Activated CD4-positive, alpha-beta T cell treated with anti-CD3 and anti-CD28 coated beads, Interleukin-2, amount 10 ng/mL, durations not matched to agents 7 days and 5 days (primary cell): ENCODE measurements at regions of chr6 and their contacts with region 1.

Region 1: DNA sequence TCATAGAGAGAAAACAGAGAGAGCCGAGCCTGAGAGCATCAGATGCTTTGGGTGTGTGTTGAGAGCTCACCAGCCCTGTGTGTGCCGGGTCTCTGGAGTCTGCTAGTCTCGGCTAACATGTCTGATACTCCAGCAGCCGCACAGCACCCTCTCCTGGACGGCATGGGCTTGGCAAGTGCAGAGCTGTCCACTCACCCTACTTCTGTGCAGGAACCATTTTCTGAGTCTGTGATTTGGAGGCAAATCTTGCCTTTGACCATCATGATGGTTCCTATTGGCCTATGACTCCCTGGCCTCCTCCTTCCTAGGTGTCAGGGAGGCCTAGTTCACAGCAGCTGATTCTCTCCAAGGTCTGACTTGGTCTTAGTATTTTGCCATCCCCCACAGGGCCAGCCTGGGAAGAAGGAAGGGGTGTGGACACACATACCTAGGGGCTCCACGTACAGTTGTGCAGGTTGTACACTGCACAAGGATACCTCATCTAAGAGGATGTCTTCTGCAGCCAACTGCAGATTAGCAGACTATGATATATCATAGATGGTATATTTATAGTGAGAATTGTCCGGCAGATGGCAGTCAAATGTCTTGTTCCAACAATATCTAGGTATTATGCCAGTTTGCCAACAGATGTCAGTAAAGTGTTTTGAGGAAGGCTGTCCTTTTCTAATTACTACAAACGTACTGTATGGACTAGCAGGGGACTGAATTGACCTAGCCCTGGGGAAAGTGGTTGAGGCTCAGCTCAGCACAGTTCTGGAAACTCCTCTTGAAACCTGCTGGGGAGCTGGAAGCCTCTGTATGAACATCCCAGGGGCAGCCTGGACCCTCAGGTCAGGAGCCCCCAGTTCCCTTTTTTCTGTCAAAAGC is 13.0 kb downstream of the FGD2 start:
- DNase-seq: peak; percentile 95
- H3K4me3 Mint-ChIP-seq: no peak overlapping the region
- H3K27ac Mint-ChIP-seq: peak overlapping the region; percentile 85
- H3K4me1 Mint-ChIP-seq: peaks cover 54% of the 10 kb centered on the region
- H3K27me3 Mint-ChIP-seq: no peaks in the 10 kb centered on the region

Region 2: DNA sequence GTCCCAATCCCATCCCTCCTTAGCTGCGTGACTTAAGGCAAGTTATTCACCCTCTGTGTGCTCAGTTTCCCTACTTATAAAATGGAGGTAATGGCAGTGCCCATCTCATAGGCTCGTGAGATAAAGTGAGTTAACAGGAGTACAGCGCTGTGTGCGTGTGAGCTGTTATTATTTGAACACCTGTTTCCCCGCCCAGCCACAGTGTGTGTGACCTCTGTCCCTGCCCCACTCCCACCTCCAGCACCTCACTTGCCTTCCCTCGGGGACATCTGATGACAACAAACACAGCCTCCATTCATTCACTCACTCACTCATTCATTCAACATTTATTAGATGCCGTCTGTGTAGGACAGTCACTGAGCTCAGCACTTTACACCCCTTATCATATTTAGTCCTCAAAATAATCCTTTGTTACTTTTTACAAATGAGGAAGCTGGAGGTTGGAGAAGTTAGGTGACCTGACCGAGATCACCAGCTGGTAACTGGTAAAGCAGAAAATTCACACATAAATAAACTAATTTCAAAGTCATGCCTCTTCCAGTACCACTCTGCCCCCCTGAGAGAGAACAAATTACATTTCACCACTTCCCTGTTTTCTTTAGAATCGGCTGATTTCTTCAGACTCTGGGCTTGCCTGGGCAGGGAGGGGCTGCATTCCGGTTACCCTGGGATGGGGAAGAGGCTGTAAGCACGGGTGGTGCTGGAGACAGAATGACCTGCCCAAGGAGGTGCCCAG is 237.8 kb before region 1 on chr6:
- CTCF ChIA-PET with region 1: interaction called, 10 read pairs
- POLR2A ChIA-PET with region 1: no interaction called
- DNase-seq: no peak
- H3K4me3 Mint-ChIP-seq: no peak overlapping the region
- H3K27ac Mint-ChIP-seq: no peak overlapping the region
- H3K4me1 Mint-ChIP-seq: peaks cover 12% of the 10 kb centered on the region
- H3K27me3 Mint-ChIP-seq: peaks cover 11% of the 10 kb centered on the region

Region 3: DNA sequence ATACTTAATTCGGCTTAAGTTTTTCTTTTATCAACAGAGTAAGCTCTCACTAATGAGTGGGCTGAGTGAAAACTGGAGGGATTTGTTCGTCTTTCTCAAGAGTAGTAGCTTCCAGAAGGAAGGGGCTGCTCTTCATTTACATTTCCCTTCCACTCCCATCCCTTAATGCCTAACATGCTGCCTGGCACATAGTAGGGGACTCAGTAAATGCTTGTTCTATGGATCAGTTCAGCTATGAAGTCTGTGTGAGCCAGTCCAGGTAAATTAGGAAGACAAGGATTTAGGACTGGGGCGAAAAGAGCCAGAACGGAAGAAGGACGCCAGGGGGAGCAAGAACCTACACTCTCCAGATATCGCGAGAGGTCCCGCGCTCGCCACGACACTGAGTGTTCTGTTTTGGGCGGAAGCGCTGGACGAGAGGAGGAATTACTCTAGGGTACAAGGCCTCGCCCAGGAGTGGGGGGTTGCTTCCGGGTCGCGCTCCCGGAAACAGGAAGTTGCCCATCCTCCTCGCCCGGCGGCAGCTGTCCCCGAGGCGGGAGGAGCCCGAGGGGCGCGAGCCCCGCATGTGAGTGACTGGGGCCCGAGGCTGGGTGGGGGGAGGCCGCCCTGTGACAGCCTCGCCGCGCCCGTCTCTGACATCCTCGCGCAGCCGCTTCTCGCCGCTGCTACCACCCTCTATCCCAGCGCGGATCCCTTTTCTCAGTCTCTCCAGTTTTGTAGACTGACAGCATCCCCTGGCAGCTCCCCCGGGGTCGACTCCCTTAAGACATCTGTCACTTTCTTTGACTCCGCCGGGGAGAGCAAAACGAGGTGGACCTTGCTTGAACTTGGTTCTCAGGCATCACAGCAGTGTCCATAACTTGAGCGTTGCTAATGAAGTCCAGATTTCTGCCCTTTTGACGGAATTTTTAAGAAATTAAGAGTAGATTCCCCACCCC is 132.7 kb before region 1 on chr6 and contains the start of gene C6orf89:
- CTCF ChIA-PET with region 1: interaction called, 39 read pairs
- POLR2A ChIA-PET with region 1: no interaction called
- DNase-seq: peak; percentile 99
- H3K4me3 Mint-ChIP-seq: peak within 1 kb of the TSS; percentile 90
- H3K27ac Mint-ChIP-seq: peak within 1 kb of the TSS; percentile 94
- H3K4me1 Mint-ChIP-seq: peaks cover 38% of the 10 kb centered on the region
- H3K27me3 Mint-ChIP-seq: no peaks in the 10 kb centered on the region
- total RNA-seq, gene C6orf89: 47.5 to 58.1 TPM

Region 4: GRCh38 chr6:37005061-37005810 is 13.2 kb before region 1 on chr6 and contains the start of gene FGD2:
- CTCF ChIA-PET with region 1: interaction called, 40 read pairs
- POLR2A ChIA-PET with region 1: no interaction called
- DNase-seq: no peak
- H3K4me3 Mint-ChIP-seq: peak within 1 kb of the TSS; percentile 26
- H3K27ac Mint-ChIP-seq: peak within 1 kb of the TSS; percentile 75
- H3K4me1 Mint-ChIP-seq: peaks cover 22% of the 10 kb centered on the region
- H3K27me3 Mint-ChIP-seq: peaks cover 2% of the 10 kb centered on the region
- total RNA-seq, gene FGD2: 1.5 to 2.1 TPM

Region 5: GRCh38 chr6:37160922-37161778 is 142.7 kb after region 1 on chr6:
- CTCF ChIA-PET with region 1: interaction called, 10 read pairs
- POLR2A ChIA-PET with region 1: no interaction called
- DNase-seq: no peak
- H3K4me3 Mint-ChIP-seq: no peak overlapping the region
- H3K27ac Mint-ChIP-seq: no peak overlapping the region
- H3K4me1 Mint-ChIP-seq: peaks cover 22% of the 10 kb centered on the region
- H3K27me3 Mint-ChIP-seq: no peaks in the 10 kb centered on the region

Region 6: GRCh38 chr6:37190159-37190535 is 171.7 kb after region 1 on chr6:
- CTCF ChIA-PET with region 1: interaction called, 11 read pairs
- POLR2A ChIA-PET with region 1: interaction called, 5 read pairs
- DNase-seq: no peak
- H3K4me3 Mint-ChIP-seq: no peak overlapping the region
- H3K27ac Mint-ChIP-seq: peak overlapping the region; percentile 81
- H3K4me1 Mint-ChIP-seq: peaks cover 77% of the 10 kb centered on the region
- H3K27me3 Mint-ChIP-seq: no peaks in the 10 kb centered on the region

Region 7: GRCh38 chr6:37222125-37222967 is 203.9 kb after region 1 on chr6:
- CTCF ChIA-PET with region 1: interaction called, 482 read pairs
- POLR2A ChIA-PET with region 1: no interaction called
- DNase-seq: peak; percentile 82
- H3K4me3 Mint-ChIP-seq: peak overlapping the region; percentile 69
- H3K27ac Mint-ChIP-seq: peak overlapping the region; percentile 78
- H3K4me1 Mint-ChIP-seq: peaks cover 35% of the 10 kb centered on the region
- H3K27me3 Mint-ChIP-seq: no peaks in the 10 kb centered on the region